Panc1 (cell line): ENCODE measurements at regions of chr7 and their contacts with region 1.

Region 1: DNA sequence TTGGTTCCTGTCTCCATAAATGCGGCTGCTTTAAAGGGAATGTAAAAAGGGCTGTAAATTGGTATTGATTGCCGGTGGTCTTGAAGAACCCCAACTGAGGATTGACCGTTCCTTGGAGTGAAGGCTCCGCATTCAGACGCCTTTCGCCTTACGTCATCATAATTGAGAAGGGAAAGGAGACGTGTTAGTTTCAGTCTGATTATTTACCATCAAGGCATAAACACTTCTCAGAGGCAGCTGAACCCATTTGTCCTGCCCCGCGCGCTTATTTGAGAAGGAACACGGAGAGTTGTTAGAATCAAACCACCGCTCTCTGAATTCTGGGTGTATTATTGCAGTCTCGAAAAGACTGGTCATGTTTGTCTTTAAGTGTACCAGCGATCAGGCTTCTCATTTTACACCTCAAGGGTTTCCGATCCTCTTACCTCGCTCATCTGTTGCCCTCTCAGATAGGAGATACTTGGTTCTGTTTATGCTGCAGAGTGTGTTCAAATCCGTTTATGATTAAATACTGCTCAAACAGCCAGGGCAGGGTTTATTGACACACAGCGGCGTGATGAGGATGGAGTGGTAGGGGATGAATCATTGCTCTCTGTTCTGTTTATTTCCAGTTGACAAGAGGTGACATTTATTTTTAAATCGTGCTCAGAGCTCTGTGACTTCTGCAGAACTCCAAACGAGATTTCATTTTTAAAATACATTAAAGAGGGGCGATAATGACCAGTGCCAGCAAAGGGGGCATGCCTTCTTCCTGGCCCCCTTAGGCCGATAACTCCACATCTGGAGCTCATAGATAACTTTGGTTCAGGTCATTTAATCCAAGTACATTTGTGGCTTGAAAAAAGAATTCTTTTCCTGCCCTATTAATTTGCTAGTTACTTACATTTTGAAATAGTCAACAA is 30.4 kb downstream of the FOXK1 start:
- DNase-seq: peak; percentile 60
- ATAC-seq: peak; percentile 63
- H3K4me3 ChIP-seq: no peak overlapping the region
- H3K27ac ChIP-seq: 0 out of 2 replicates have a peak overlapping the region, but pooled peaks have one; percentile 7
- H3K4me1 ChIP-seq: peaks cover 11% of the 10 kb centered on the region
- H3K27me3 ChIP-seq: no peaks in the 10 kb centered on the region
- CTCF ChIP-seq: no peak

Region 2: DNA sequence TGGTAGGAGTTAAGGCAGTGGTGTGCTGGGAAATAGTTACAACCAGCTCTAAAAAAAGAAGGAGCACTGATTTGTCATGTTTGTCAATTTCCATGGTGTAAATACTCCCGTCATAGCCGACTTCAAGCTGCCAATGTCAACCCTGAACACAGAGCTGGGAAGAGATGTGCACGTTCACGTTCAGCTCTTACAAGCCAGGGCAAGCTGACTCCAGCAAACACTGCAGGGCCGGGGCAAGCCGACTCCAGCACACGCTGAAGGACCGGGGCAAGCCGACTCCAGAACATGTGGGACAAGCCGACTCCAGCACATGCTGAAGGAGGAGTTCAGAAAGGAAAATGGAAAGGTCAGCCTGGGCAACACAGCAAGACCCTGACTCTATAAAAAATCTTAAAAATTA is 1611.9 kb before region 1 on chr7:
- CTCF ChIA-PET with region 1: no interaction called
- POLR2A ChIA-PET with region 1: interaction called, 10 read pairs
- in situ Hi-C with region 1: no loop called
- intact Hi-C with region 1: no loop called
- DNase-seq: no peak
- ATAC-seq: no peak
- H3K4me3 ChIP-seq: no peak overlapping the region
- H3K27ac ChIP-seq: no peak overlapping the region
- H3K4me1 ChIP-seq: no peaks in the 10 kb centered on the region
- H3K27me3 ChIP-seq: no peaks in the 10 kb centered on the region
- CTCF ChIP-seq: no peak

Region 3: GRCh38 chr7:4692055-4692454 is 20.5 kb before region 1 on chr7:
- CTCF ChIA-PET with region 1: no interaction called
- POLR2A ChIA-PET with region 1: no interaction called
- in situ Hi-C with region 1: no loop called
- intact Hi-C with region 1: no loop called
- DNase-seq: no peak
- ATAC-seq: no peak
- H3K4me3 ChIP-seq: no peak overlapping the region
- H3K27ac ChIP-seq: no peak overlapping the region
- H3K4me1 ChIP-seq: peaks cover 20% of the 10 kb centered on the region
- H3K27me3 ChIP-seq: no peaks in the 10 kb centered on the region
- CTCF ChIP-seq: no peak